CD4-positive, alpha-beta memory T cell (primary cell): ENCODE measurements at regions of chr14 and their contacts with region 1.

Region 1: DNA sequence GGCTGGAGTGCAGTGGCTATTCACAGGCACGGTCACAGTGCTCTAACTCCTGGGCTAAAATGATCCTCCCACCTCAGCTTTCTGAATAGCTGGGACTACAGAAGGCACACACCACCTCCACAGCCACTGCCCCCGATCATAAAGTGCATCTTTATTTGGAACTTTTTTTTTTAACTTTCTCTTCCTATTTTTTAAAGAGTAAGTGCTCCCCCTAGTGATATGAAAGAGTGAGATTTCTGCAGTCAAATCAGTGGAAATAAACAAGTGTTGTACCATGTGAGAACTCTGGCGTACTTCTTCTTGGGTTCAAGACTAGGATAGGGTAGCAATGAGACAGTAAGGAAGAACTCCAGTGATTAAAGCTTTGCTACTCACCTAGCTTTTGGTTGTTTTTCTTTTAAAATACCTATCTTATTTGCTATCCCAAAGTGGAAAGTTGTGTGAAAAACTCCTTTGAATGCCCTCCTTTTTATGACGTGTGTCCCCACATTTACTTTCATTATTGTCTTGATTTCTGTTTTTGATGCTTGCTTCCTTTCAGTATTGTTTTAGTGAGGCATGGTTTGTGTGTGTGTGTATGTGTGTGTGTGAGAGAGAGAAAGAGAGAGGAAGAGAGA is 6.6 kb downstream of the PPP4R4 start:
- DNase-seq: peak; percentile 68 to 81 (median 73)
- H3K4me3 ChIP-seq: peak overlapping the region in 1 of 2 donors; percentile 46
- H3K4me3 Mint-ChIP-seq: peak overlapping the region; percentile 2 to 79 (median 58)
- H3K27ac ChIP-seq: peak overlapping the region; percentile 29
- H3K27ac Mint-ChIP-seq: peak overlapping the region; percentile 18 to 91 (median 66)
- H3K4me1 ChIP-seq: peaks cover 10% of the 10 kb centered on the region
- H3K4me1 Mint-ChIP-seq: peaks cover 10 to 23% (median 16%) of the 10 kb centered on the region in 4 donors
- H3K27me3 ChIP-seq: peaks cover 2% of the 10 kb centered on the region
- H3K27me3 Mint-ChIP-seq: peaks cover 2 to 6% of the 10 kb centered on the region in 2 donors

Region 2: DNA sequence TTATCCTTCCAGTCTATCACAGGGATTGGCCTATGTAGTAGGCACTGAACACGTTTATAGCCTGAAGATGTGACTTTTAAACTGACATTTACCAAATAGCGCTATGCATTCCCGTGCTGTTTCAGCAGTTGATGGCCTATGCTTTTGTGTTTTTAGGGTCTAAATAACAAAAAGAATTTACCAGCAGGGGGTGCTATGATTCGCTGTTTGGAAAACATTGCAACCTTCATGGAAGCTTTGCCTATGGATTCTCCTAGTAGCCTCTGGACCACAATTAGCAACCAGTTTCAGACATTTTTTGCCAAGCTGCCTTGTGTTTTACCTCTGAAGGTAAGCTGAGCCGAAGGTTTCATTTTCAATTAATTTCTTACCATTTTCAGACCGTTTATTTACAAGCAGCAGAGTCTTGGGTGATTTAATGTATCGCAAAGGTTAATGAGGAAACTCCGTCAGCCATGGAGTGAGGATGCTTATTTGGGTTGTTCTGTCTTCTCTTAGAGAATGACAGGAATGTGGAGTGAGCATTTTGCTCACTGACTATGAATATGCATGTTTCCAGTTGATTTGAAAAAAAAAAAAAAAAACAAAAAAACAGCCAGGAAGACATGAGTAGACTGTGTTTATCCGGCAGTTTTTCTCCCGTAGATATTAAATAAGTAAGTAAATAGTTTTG is 525.5 kb before region 1 on chr14:
- CTCF ChIA-PET with region 1: interaction called, 12 read pairs
- POLR2A ChIA-PET with region 1: no interaction called
- intact Hi-C with region 1: no loop called
- DNase-seq: peak in 1 of 5 donors; percentile 2
- H3K4me3 ChIP-seq: no peak overlapping the region
- H3K4me3 Mint-ChIP-seq: no peak overlapping the region
- H3K27ac ChIP-seq: no peak overlapping the region
- H3K27ac Mint-ChIP-seq: no peak overlapping the region
- H3K4me1 ChIP-seq: no peaks in the 10 kb centered on the region
- H3K4me1 Mint-ChIP-seq: no peaks in the 10 kb centered on the region
- H3K27me3 ChIP-seq: no peaks in the 10 kb centered on the region
- H3K27me3 Mint-ChIP-seq: peaks cover 17 to 30% of the 10 kb centered on the region in 2 donors

Region 3: GRCh38 chr14:94129111-94129757 is 51.5 kb before region 1 on chr14 and contains the start of gene IFI27L2:
- CTCF ChIA-PET with region 1: interaction called, 126 read pairs
- POLR2A ChIA-PET with region 1: interaction called, 12 read pairs
- intact Hi-C with region 1: loop called (anchors 1 kb)
- DNase-seq: peak; percentile 34 to 80 (median 46)
- H3K4me3 ChIP-seq: peak within 1 kb of the TSS; percentile 50 to 82
- H3K4me3 Mint-ChIP-seq: peak within 1 kb of the TSS; percentile 86 to 93 (median 90)
- H3K27ac ChIP-seq: peak within 1 kb of the TSS; percentile 46
- H3K27ac Mint-ChIP-seq: peak within 1 kb of the TSS; percentile 77 to 88 (median 84)
- H3K4me1 ChIP-seq: peaks cover 18% of the 10 kb centered on the region
- H3K4me1 Mint-ChIP-seq: peaks cover 12 to 25% (median 20%) of the 10 kb centered on the region in 4 donors
- H3K27me3 ChIP-seq: no peaks in the 10 kb centered on the region
- H3K27me3 Mint-ChIP-seq: no peaks in the 10 kb centered on the region
- total RNA-seq, gene IFI27L2: 34.0 to 38.2 TPM